ENCODE measurements at regions of chr11 and their contacts with region 1.

Region 1: GRCh38 chr11:122781378-122782195 is 56.7 kb upstream of the CRTAM start:
- DNase-seq: peak; percentile 80
- H3K4me3 ChIP-seq: no peak overlapping the region
- H3K27ac ChIP-seq: no peak overlapping the region
- H3K27me3 ChIP-seq: no peaks in the 10 kb centered on the region
- CTCF ChIP-seq: peak; percentile 94

Region 2: DNA sequence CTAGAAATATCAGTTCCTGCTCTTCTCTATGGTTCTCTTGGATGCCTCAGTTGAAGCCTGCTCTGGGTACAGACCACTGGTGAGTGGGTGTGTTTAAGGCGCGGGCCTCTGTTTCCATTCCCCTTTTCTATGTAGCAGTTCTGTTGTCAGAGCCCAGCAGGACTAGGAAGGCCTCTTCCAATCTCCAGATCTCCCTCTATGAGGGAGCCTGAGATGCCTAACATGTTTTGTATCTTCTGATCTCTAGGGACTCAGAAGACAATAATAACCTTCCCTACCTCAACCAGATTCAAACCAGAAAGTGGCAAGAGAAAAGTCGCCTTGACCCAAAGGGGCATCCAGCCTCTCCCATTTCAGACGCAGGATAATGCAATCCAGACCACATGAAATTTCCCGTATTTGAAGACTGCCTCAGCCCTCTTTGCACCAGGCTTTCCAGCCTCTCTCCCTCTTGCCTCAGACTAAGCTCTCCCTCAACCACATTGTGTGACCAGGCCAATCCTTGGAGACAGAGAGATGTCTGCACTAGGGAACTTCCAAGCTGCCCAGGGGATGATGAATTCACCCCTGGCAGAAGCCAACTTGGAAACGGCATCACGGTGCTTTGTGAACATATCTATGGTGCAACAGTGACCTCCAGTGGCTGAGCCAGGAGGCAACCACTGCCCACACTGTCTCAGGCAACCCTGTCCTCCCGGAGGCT is 276.1 kb before region 1 on chr11:
- CTCF ChIA-PET with region 1: no interaction called
- POLR2A ChIA-PET with region 1: no interaction called
- DNase-seq: peak; percentile 81
- H3K4me3 ChIP-seq: no peak overlapping the region
- H3K27ac ChIP-seq: no peak overlapping the region
- H3K27me3 ChIP-seq: no peaks in the 10 kb centered on the region
- CTCF ChIP-seq: peak; percentile 90

Region 3: GRCh38 chr11:122556605-122557004 is 225.0 kb before region 1 on chr11:
- CTCF ChIA-PET with region 1: no interaction called
- POLR2A ChIA-PET with region 1: no interaction called
- DNase-seq: no peak
- H3K4me3 ChIP-seq: peak overlapping the region; percentile 43
- H3K27ac ChIP-seq: no peak overlapping the region
- H3K27me3 ChIP-seq: peaks cover 3% of the 10 kb centered on the region
- CTCF ChIP-seq: peak; percentile 53

Region 4: DNA sequence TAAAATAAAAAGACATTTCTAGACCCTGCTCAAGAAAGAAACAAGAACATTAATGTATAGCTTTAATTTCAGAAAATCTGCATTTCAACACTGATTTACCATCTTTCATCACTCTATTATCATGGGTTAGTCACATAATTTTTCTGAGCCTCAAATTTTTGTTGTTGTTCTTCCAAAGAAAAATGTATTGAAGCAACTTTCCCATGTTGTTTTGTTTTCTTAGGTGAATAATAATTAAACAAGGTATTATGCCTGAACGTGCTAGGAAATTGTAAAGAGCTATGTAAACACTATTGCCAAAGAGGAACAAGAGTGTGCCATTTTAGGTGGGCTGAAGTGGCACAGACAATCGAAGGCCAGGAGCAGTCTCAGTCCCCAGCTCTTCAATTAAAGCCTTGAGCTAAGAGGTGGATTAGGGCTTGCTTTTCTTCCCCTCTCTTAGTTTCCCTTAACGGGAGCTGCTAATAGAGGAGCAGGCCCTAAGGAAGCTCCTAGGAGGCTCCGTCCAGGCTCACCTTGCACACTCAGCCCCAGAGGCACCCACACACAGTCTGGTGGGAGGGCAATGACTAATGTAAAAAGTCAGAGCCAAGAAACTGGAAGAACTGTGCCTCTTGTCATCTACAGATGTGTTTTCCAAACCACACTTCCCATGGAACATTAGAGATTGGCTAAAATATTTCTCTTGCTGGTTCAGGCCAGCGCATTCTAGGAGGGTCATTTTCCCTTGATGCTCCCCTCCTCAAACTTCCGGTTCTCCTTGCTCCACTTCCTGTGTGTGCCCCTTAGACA is 134.8 kb before region 1 on chr11:
- CTCF ChIA-PET with region 1: interaction called, 10 read pairs
- POLR2A ChIA-PET with region 1: no interaction called
- DNase-seq: no peak
- H3K4me3 ChIP-seq: no peak overlapping the region
- H3K27ac ChIP-seq: peak overlapping the region; percentile 74
- H3K27me3 ChIP-seq: no peaks in the 10 kb centered on the region
- CTCF ChIP-seq: no peak

Region 5: DNA sequence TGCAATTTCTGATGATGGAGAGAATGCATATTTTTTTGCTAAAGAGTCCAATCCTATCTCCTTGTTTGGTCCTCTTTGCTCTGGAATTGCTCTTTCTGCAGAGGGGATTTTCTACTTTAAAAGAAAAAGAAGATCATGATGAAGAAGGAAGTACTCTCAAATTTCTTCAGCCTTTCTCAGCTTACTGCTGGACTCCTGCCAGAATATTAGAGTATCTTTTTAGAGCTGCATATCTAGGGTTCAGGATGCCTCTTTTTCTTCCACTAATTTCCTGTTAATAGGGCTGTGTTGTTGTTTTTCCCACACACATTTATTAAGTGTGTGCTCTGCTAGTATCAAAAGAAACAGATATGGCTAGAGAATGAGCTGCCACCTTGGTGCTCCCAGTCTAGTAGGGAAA is 107.9 kb before region 1 on chr11:
- CTCF ChIA-PET with region 1: interaction called, 11 read pairs
- POLR2A ChIA-PET with region 1: interaction called, 3 read pairs
- DNase-seq: no peak
- H3K4me3 ChIP-seq: no peak overlapping the region
- H3K27ac ChIP-seq: no peak overlapping the region
- H3K27me3 ChIP-seq: no peaks in the 10 kb centered on the region
- CTCF ChIP-seq: no peak

Region 6: DNA sequence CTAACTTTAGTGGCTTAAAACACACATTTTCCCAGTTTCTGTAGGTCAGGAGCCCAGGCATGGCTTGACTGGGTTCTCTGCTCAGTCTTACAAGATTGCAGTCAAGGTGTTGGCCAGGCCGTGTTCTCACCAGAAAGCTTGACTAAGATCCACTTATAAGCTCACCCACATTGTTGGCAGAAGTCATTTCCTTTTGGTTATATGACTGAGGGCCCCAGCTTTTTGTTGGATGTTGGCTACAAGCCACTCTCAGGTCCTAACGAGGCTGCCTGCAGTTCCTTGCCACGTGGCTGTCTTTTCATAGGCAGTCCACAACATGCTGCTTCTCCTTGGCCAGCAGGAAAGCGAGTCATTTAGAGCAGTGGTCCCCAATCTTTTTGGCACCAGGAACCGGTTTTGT is 22.6 kb before region 1 on chr11:
- CTCF ChIA-PET with region 1: interaction called, 15 read pairs
- POLR2A ChIA-PET with region 1: no interaction called
- DNase-seq: no peak
- H3K4me3 ChIP-seq: no peak overlapping the region
- H3K27ac ChIP-seq: no peak overlapping the region
- H3K27me3 ChIP-seq: no peaks in the 10 kb centered on the region
- CTCF ChIP-seq: no peak

Region 7: GRCh38 chr11:122808478-122808869 is 26.9 kb after region 1 on chr11:
- CTCF ChIA-PET with region 1: interaction called, 13 read pairs
- POLR2A ChIA-PET with region 1: no interaction called
- DNase-seq: no peak
- H3K4me3 ChIP-seq: no peak overlapping the region
- H3K27ac ChIP-seq: peak overlapping the region; percentile 76
- H3K27me3 ChIP-seq: no peaks in the 10 kb centered on the region
- CTCF ChIP-seq: no peak

Region 8: GRCh38 chr11:123202155-123203151 is 420.9 kb after region 1 on chr11:
- CTCF ChIA-PET with region 1: no interaction called
- POLR2A ChIA-PET with region 1: no interaction called
- DNase-seq: no peak
- H3K4me3 ChIP-seq: no peak overlapping the region
- H3K27ac ChIP-seq: peak overlapping the region; percentile 3
- H3K27me3 ChIP-seq: no peaks in the 10 kb centered on the region
- CTCF ChIP-seq: no peak